ENCODE measurements at regions of chr4 and their contacts with region 1.

Region 1: GRCh38 chr4:20684852-20685763 is 15.2 kb upstream of the PACRGL start:
- DNase-seq: peak; percentile 57
- H3K4me3 ChIP-seq: no peak overlapping the region
- H3K27ac ChIP-seq: no peak overlapping the region
- H3K4me1 ChIP-seq: no peaks in the 10 kb centered on the region
- H3K27me3 ChIP-seq: no peaks in the 10 kb centered on the region
- CTCF ChIP-seq: peak; percentile 71

Region 2: GRCh38 chr4:18689308-18690115 is 1995.6 kb before region 1 on chr4:
- CTCF ChIA-PET with region 1: no interaction called
- POLR2A ChIA-PET with region 1: no interaction called
- intact Hi-C with region 1: loop called (anchors 2 kb)
- DNase-seq: peak; percentile 69
- H3K4me3 ChIP-seq: no peak overlapping the region
- H3K27ac ChIP-seq: no peak overlapping the region
- H3K4me1 ChIP-seq: no peaks in the 10 kb centered on the region
- H3K27me3 ChIP-seq: no peaks in the 10 kb centered on the region
- CTCF ChIP-seq: peak; percentile 86

Region 3: GRCh38 chr4:19224820-19225219 is 1460.3 kb before region 1 on chr4:
- CTCF ChIA-PET with region 1: no interaction called
- POLR2A ChIA-PET with region 1: no interaction called
- intact Hi-C with region 1: loop called (anchors 10 kb)
- DNase-seq: peak; percentile 62
- H3K4me3 ChIP-seq: no peak overlapping the region
- H3K27ac ChIP-seq: no peak overlapping the region
- H3K4me1 ChIP-seq: no peaks in the 10 kb centered on the region
- H3K27me3 ChIP-seq: no peaks in the 10 kb centered on the region
- CTCF ChIP-seq: peak; percentile 56

Region 4: GRCh38 chr4:19309378-19309777 is 1375.7 kb before region 1 on chr4:
- CTCF ChIA-PET with region 1: no interaction called
- POLR2A ChIA-PET with region 1: no interaction called
- intact Hi-C with region 1: loop called (anchors 5 kb)
- DNase-seq: peak; percentile 96
- H3K4me3 ChIP-seq: no peak overlapping the region
- H3K27ac ChIP-seq: no peak overlapping the region
- H3K4me1 ChIP-seq: peaks cover 32% of the 10 kb centered on the region
- H3K27me3 ChIP-seq: no peaks in the 10 kb centered on the region
- CTCF ChIP-seq: peak; percentile 60

Region 5: GRCh38 chr4:20305976-20306375 is 379.1 kb before region 1 on chr4:
- CTCF ChIA-PET with region 1: interaction called, 7 read pairs
- POLR2A ChIA-PET with region 1: no interaction called
- intact Hi-C with region 1: loop called (anchors 5 kb)
- DNase-seq: peak; percentile 74
- H3K4me3 ChIP-seq: no peak overlapping the region
- H3K27ac ChIP-seq: peak overlapping the region; percentile 63
- H3K4me1 ChIP-seq: peaks cover 26% of the 10 kb centered on the region
- H3K27me3 ChIP-seq: no peaks in the 10 kb centered on the region
- CTCF ChIP-seq: peak; percentile 57

Measured in A673 (cell line).